OCI-LY7 (cell line): ENCODE measurements at regions of chr19 and their contacts with region 1.

Region 1: DNA sequence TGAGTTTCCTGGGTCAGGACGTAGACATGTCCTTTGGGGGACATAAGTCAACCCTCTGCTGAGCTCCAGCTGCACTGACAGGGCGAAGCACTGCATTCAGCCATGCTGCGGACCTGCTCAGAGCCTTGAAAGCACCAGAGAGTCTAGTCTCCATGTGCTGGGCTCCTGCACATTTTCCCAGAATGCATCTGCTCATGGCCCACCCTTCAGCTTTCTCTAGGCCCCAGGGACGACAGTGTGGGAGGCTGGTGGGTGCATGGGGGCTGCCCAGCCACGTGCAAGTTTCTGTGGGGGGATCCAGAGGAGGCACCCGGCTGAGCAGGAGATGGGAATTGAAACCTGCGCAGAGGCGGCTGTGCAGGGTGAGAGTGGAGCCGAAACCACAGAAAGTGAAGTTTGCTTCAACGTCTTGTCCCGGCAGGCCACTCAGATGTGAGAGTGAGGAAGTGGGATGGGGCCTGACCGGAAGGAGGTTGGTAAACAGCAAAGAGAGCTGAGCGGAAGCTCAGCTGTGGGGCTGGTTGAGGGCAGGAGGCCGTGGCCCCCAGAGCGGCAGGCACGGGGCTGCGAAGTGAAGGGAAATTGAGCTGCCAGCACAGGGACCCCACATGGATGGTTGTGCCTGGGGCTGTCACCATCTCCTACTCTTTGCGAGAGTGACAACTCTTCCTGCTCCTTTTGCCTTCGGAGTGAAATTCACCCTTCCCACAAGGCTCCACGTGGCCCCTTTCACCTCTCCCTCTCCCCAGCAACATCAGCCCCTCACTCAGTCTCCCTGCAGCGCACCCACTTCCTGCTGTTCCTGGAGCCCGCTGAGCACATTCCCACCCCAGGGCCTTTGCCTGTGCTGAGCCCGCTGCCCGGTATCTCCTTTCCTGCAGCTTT is 11.8 kb downstream of the PGLS start:
- DNase-seq: peak; percentile 97
- H3K4me3 ChIP-seq: peak overlapping the region; percentile 46
- H3K27ac ChIP-seq: peak overlapping the region; percentile 95
- H3K4me1 ChIP-seq: peaks cover 63% of the 10 kb centered on the region
- CTCF ChIP-seq: no peak

Region 2: DNA sequence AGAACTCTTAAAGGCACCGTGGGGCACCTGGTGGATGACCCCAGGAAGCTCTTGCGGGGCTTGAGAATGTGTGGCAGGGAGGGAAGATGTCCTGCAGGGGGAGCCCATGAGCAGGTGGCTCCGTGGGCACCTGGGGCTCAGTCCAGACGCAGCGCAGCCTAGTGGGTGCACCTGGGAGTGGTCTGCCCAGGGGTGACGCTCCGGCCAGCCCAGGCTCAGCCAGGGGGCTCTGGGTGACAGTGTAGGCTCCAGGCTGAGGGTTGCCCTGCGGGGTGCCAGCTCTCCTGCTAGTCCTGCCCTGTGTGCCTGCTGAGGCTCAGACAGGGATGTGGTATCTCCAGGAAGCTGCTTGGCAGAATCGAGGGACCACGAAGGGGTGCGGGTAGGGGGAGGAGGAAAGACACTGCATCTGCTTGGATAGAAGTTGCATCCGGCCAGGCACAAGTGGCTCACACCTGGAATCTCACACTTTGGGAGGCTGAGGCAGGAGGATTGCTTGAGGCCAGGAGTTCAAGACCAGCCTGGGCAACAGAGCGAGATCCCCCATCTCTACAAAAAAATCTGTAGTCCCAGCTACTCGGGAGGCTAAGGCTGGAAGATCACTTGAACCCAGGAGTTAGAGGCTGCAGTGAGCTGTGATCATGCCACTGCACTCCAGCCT is 26.8 kb before region 1 on chr19:
- CTCF ChIA-PET with region 1: interaction called, 4 read pairs
- POLR2A ChIA-PET with region 1: interaction called, 5 read pairs
- intact Hi-C with region 1: loop called (anchors 2 kb)
- DNase-seq: peak; percentile 92
- H3K4me3 ChIP-seq: no peak overlapping the region
- H3K27ac ChIP-seq: no peak overlapping the region
- H3K4me1 ChIP-seq: peaks cover 20% of the 10 kb centered on the region
- CTCF ChIP-seq: peak; percentile 99

Region 3: GRCh38 chr19:17511724-17512573 is 11.3 kb before region 1 on chr19:
- CTCF ChIA-PET with region 1: interaction called, 8 read pairs
- POLR2A ChIA-PET with region 1: interaction called, 33 read pairs
- intact Hi-C with region 1: loop called (anchors 1 kb)
- DNase-seq: peak; percentile 80
- H3K4me3 ChIP-seq: peak overlapping the region; percentile 83
- H3K27ac ChIP-seq: peak overlapping the region; percentile 74
- H3K4me1 ChIP-seq: peaks cover 17% of the 10 kb centered on the region
- CTCF ChIP-seq: peak; percentile 51

Region 4: GRCh38 chr19:17543986-17544385 is 20.8 kb after region 1 on chr19:
- CTCF ChIA-PET with region 1: no interaction called
- POLR2A ChIA-PET with region 1: no interaction called
- intact Hi-C with region 1: no loop called
- DNase-seq: no peak
- H3K4me3 ChIP-seq: no peak overlapping the region
- H3K27ac ChIP-seq: no peak overlapping the region
- H3K4me1 ChIP-seq: peaks cover 10% of the 10 kb centered on the region
- CTCF ChIP-seq: no peak

Region 5: DNA sequence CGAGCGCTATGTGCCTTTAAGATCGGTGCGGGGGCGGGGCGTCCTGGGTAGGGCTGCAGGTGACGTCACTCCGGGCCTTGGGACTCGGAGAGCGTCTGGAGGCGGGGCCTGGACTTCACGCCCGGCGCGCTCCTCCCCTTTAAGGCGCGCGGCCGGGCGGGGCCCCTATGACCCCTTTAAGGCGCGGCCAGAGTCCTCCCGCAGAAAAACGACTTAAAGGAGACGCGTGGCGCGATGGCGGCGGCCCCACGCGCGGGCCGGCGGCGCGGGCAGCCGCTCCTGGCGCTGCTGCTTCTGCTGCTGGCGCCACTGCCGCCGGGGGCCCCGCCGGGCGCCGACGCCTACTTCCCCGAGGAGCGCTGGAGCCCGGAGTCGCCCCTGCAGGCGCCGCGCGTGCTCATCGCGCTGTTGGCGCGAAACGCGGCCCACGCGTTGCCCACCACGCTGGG is 32.3 kb after region 1 on chr19 and contains the start of gene COLGALT1:
- CTCF ChIA-PET with region 1: no interaction called
- POLR2A ChIA-PET with region 1: interaction called, 3 read pairs
- intact Hi-C with region 1: loop called (anchors 1 kb)
- DNase-seq: peak; percentile 100
- H3K4me3 ChIP-seq: peak within 1 kb of the TSS; percentile 88
- H3K27ac ChIP-seq: peak within 1 kb of the TSS; percentile 44
- H3K4me1 ChIP-seq: peaks cover 14% of the 10 kb centered on the region
- CTCF ChIP-seq: no peak
- total RNA-seq, gene COLGALT1: 43.0 and 49.6 TPM in 2 replicates

Region 6: GRCh38 chr19:17755977-17756670 is 232.9 kb after region 1 on chr19:
- CTCF ChIA-PET with region 1: no interaction called
- POLR2A ChIA-PET with region 1: no interaction called
- intact Hi-C with region 1: loop called (anchors 10 kb)
- DNase-seq: peak; percentile 91
- H3K4me3 ChIP-seq: peak overlapping the region; percentile 54
- H3K27ac ChIP-seq: peak overlapping the region; percentile 93
- H3K4me1 ChIP-seq: peaks cover 70% of the 10 kb centered on the region
- CTCF ChIP-seq: no peak

Region 7: DNA sequence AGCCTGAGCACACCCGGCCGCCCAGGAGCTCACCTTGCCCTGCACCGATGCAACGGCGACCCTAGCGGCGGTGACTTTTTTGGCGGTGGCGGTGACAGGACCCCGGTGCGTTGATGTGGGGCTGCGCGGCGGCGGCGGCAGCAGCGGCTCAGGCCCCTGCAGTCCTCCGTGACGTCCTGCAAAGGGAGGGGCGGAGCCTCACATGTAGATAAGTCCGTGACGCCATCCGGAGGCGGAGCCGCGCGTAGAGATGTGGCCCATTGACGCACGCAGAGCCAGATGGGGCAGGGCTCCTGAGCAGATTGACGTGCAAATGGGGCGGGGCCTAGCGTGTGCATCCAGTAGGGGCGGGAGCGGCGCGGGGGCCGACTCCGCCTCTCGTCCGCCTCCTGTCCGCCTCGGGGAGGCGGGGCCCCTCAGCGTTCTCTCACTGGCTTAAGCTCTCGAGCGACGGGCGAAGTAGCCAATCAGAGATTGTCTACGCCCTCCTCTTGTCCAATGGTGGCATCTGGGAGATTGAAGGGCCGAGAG is 680.7 kb after region 1 on chr19 and contains the start of gene RAB3A:
- CTCF ChIA-PET with region 1: interaction called, 11 read pairs
- POLR2A ChIA-PET with region 1: no interaction called
- intact Hi-C with region 1: no loop called
- DNase-seq: peak; percentile 100
- H3K4me3 ChIP-seq: peak within 1 kb of the TSS; percentile 87
- H3K27ac ChIP-seq: peak within 1 kb of the TSS; percentile 84
- H3K4me1 ChIP-seq: peaks cover 29% of the 10 kb centered on the region
- CTCF ChIP-seq: no peak
- total RNA-seq, gene RAB3A: 2.9 and 4.9 TPM in 2 replicates